ENCODE measurements at regions of chr16 and their contacts with region 1.

Region 1: GRCh38 chr16:89246903-89247733 is 29.6 kb downstream of the ZNF778 start:
- DNase-seq: peak; percentile 99
- ATAC-seq: peak; percentile 93
- H3K4me3 Mint-ChIP-seq: peak overlapping the region; percentile 71
- H3K27ac Mint-ChIP-seq: no peak overlapping the region
- H3K4me1 Mint-ChIP-seq: peaks cover 15% of the 10 kb centered on the region
- H3K27me3 Mint-ChIP-seq: no peaks in the 10 kb centered on the region

Region 2: DNA sequence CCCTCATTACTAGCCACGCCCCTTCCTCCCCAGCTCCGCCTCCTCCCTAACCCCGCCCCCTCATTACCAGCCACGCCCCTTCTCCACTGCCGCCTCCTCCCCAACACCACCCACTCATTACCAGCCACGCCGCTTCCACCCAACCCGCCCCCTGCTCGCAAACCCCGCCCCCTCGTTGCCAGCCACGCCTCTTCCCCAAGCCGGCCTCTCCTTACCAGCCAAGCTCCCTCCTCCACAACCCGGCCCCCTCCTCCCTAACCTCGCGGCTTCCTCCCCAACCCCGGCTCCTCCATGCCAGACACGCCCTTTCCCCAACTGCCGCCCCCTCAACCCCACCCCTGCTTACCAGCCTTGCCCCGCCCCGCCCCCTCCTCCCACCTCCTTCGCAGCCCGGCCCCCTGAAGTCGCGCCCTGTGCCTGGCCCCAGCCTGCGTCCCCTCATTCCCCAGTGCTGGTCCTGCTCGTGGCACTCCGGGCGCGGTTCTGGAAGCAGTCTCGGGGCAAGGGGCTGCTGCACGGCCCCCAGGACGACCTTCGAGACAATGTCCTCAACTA is 54.0 kb before region 1 on chr16:
- CTCF ChIA-PET with region 1: no interaction called
- POLR2A ChIA-PET with region 1: interaction called, 5 read pairs
- intact Hi-C with region 1: loop called in 1 of 2 experiments (anchors 1 kb)
- DNase-seq: no peak
- ATAC-seq: peak; percentile 78
- H3K4me3 Mint-ChIP-seq: no peak overlapping the region
- H3K27ac Mint-ChIP-seq: no peak overlapping the region
- H3K4me1 Mint-ChIP-seq: no peaks in the 10 kb centered on the region
- H3K27me3 Mint-ChIP-seq: no peaks in the 10 kb centered on the region

Region 3: GRCh38 chr16:89201439-89202377 is 45.4 kb before region 1 on chr16:
- CTCF ChIA-PET with region 1: no interaction called
- POLR2A ChIA-PET with region 1: no interaction called
- intact Hi-C with region 1: loop called (anchors 1 to 5 kb)
- DNase-seq: peak; percentile 94
- ATAC-seq: peak; percentile 97
- H3K4me3 Mint-ChIP-seq: peak overlapping the region; percentile 44
- H3K27ac Mint-ChIP-seq: no peak overlapping the region
- H3K4me1 Mint-ChIP-seq: peaks cover 13% of the 10 kb centered on the region
- H3K27me3 Mint-ChIP-seq: peaks cover 32% of the 10 kb centered on the region

Region 4: GRCh38 chr16:89574681-89575246 is 327.6 kb after region 1 on chr16:
- CTCF ChIA-PET with region 1: no interaction called
- POLR2A ChIA-PET with region 1: no interaction called
- intact Hi-C with region 1: loop called in 1 of 2 experiments (anchors 5 kb)
- DNase-seq: peak; percentile 82
- ATAC-seq: peak; percentile 86
- H3K4me3 Mint-ChIP-seq: peak overlapping the region; percentile 39
- H3K27ac Mint-ChIP-seq: no peak overlapping the region
- H3K4me1 Mint-ChIP-seq: peaks cover 12% of the 10 kb centered on the region
- H3K27me3 Mint-ChIP-seq: peaks cover 3% of the 10 kb centered on the region

Region 5: DNA sequence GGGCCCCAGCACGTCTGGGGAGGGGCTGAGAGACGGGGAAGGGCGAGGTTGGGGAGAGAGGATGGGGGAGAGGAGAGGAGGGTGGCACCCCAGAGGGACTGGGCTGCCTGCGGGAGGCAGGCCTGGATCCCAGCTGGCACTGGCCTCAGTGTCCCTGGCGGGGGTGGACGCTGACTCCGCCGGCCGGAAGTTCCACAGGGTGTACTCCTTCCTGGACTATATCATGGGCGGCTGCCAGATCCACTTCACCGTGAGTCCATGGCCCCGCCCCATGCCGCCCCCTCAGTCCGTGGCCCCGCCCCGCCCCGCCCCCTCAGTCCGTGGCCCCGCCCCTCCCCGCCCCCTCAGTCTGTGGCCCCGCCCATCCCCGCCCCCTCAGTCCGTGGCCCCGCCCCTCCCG is 339.7 kb after region 1 on chr16:
- CTCF ChIA-PET with region 1: no interaction called
- POLR2A ChIA-PET with region 1: no interaction called
- intact Hi-C with region 1: loop called in 1 of 2 experiments (anchors 1 kb)
- DNase-seq: peak; percentile 60
- ATAC-seq: peak; percentile 31
- H3K4me3 Mint-ChIP-seq: no peak overlapping the region
- H3K27ac Mint-ChIP-seq: no peak overlapping the region
- H3K4me1 Mint-ChIP-seq: no peaks in the 10 kb centered on the region
- H3K27me3 Mint-ChIP-seq: no peaks in the 10 kb centered on the region